Ovary (tissue), 10 donors: ENCODE measurements at regions of chr1 and their contacts with region 1.

Region 1: GRCh38 chr1:76725864-76726619 is 141.2 kb upstream of the ST6GALNAC5 start:
- DNase-seq: no peak
- H3K4me3 ChIP-seq: no peak overlapping the region
- H3K27ac ChIP-seq: no peak overlapping the region
- H3K4me1 ChIP-seq: no peaks in the 10 kb centered on the region
- H3K27me3 ChIP-seq: no peaks in the 10 kb centered on the region
- CTCF ChIP-seq: no peak
- EP300 ChIP-seq: no peak
- POLR2A ChIP-seq: no peak

Region 2: DNA sequence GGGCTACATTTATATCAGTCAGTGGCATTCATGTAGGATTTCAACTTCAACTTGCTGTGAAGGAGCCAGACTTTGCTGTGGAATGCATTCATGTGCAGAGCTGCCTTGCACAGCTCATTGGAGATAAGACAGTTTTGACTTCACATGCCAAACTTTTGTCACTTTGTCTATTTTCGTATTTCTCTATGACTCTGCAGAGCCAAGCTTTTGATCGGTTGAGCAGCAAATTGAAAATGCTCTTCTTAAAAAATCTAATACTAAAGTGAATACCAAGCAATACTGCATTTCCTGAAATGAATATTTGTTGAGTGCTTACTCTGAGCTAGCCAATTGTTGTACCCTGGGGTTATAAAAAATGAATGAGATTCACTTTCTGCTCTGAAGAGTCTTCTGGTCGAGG is 262.8 kb before region 1 on chr1:
- intact Hi-C with region 1: loop called in 1 of 4 experiments (anchors 5 kb)
- DNase-seq: no peak
- H3K4me3 ChIP-seq: no peak overlapping the region
- H3K27ac ChIP-seq: no peak overlapping the region
- H3K4me1 ChIP-seq: no peaks in the 10 kb centered on the region
- H3K27me3 ChIP-seq: no peaks in the 10 kb centered on the region
- CTCF ChIP-seq: no peak
- EP300 ChIP-seq: no peak
- POLR2A ChIP-seq: no peak

Region 3: DNA sequence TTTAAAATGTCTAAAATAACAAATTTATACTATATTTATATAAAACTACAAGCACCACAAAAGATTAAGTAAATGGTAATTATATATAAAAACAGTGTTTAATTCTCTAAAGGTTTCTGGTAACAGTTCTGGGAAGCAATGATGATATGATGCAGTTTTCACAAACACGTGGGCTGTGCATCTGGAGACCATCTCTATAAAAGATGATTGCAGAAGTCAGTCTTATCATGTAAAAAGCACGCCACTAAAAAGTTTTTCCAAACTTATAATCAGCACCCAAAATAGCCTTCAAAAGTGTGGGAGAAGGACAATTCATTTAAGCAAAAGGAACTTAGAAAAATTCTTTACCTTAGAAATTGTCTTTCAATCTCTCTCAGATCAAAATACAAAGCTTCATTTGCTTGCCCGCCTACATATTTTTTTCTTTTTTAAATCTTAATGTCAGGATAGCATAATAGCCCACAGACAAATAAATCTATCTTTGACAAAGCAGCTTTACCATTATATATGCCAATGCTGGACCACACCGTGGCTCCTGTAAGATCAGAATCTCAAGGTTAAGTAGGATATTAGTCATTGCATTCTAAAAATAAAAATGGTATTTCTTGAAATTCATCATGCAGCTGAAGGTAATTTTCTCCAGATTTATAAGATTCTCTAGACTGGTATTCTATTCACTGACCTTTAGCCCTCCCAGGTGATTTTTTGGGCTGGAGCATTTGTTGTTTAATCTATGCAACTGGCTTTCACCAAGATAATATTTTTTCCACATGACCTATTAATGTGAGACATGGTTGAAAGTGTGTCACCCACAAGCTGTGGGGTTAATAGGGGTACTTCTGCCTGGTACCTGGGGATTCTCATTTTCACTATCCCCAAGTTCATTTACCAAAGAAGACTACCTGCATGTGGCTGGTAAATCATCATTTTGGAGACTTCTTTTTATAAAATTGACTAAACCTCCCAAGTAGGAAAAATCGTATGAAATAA is 48.3 kb before region 1 on chr1:
- intact Hi-C with region 1: no loop called
- DNase-seq: no peak
- H3K4me3 ChIP-seq: no peak overlapping the region
- H3K27ac ChIP-seq: no peak overlapping the region
- H3K4me1 ChIP-seq: no peaks in the 10 kb centered on the region
- H3K27me3 ChIP-seq: no peaks in the 10 kb centered on the region
- CTCF ChIP-seq: no peak
- EP300 ChIP-seq: no peak
- POLR2A ChIP-seq: no peak

Region 4: GRCh38 chr1:76799700-76800099 is 73.7 kb after region 1 on chr1:
- intact Hi-C with region 1: no loop called
- DNase-seq: no peak
- H3K4me3 ChIP-seq: no peak overlapping the region
- H3K27ac ChIP-seq: no peak overlapping the region
- H3K4me1 ChIP-seq: no peaks in the 10 kb centered on the region
- H3K27me3 ChIP-seq: no peaks in the 10 kb centered on the region
- CTCF ChIP-seq: no peak
- EP300 ChIP-seq: no peak
- POLR2A ChIP-seq: no peak

Region 5: DNA sequence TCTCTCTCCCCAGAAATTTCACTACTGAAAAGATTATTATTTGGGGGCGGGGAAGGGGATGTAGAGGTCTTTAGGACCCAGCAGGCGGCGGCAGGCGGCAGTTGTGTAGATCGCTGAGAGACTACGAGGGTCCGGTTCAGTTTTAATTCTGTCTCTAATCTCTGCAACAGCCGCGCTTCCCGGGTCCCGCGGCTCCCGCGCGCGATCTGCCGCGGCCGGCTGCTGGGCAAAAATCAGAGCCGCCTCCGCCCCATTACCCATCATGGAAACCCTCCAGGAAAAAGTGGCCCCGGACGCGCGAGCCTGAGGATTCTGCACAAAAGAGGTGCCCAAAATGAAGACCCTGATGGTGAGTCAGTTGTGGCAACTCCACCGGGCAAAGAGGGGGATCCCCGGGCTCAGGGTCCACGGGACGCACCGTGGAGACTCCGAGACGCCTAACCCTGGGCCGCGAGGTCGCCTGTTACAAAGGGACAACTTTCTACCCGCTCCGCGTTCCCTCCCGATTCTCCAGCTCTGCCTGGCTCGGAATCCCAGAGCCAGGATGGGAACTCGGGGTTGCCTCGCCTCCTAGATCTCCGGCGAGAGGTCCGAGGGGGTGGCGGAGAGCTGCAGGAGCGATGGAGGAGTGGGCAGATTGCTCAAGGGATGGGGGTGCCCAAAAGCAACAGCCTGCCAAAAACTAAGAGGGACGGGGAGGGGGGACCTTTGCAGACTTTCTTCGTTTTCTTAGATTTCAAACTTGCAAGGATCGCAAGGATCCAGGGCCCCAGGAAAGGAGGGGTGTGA is 141.5 kb after region 1 on chr1 and contains the start of gene ST6GALNAC5:
- intact Hi-C with region 1: no loop called
- DNase-seq: peak; percentile 22 to 44 (median 43)
- H3K4me3 ChIP-seq: peak within 1 kb of the TSS; percentile 39
- H3K27ac ChIP-seq: peak within 1 kb of the TSS; percentile 5 to 65
- H3K4me1 ChIP-seq: peaks cover 2% of the 10 kb centered on the region
- H3K27me3 ChIP-seq: no peaks in the 10 kb centered on the region
- CTCF ChIP-seq: no peak
- EP300 ChIP-seq: no peak
- POLR2A ChIP-seq: no peak
- total RNA-seq, gene ST6GALNAC5: 4.6 to 21.0 (median 11.4) TPM